Dendritic cell treated with granulocyte-macrophage colony-stimulating factor and Interleukin-4, amounts not matched to agents 40 ng/mL and 50 ng/mL, for 4 days (primary cell): ENCODE measurements at regions of chr3 and their contacts with region 1.

Region 1: GRCh38 chr3:17894434-17895060 is 152.1 kb upstream of the TBC1D5 start:
- H3K4me3 Mint-ChIP-seq: no peak overlapping the region
- H3K27ac Mint-ChIP-seq: no peak overlapping the region
- H3K4me1 Mint-ChIP-seq: no peaks in the 10 kb centered on the region
- H3K27me3 Mint-ChIP-seq: no peaks in the 10 kb centered on the region

Region 2: DNA sequence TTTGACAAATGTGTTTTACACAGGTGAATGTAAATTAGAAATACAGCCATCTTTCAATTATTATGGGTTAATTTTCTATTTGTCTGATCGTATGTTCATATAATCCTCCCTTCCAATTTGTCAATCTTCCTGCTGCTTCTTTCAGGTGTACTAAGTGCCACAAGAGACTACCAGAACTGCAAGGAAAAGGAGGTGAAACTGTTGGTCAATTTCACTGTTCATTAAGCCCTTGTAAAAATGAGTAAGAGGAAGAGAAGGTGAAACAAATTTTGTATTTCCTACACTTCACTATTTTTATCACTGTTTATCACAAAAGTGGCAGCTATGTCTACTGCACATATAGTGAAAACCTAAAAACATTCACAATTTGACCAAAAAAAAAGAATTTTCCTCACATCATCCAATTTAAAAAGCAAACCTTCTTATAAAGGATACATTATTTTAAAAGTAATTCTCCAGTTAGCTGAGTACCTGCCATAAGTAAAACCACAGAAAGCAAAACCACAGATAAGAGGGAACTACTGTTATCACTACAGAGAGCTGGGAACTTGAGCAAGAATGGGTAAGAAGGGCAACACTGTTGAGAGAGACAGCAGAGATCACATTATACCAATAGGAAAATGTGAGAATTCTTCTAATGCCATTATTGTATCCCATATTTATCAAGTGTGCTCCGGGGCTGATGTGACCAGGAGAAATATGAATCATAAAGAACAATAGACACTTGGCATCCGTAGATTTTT is 315.1 kb before region 1 on chr3:
- intact Hi-C with region 1: no loop called
- H3K4me3 Mint-ChIP-seq: no peak overlapping the region
- H3K27ac Mint-ChIP-seq: no peak overlapping the region
- H3K4me1 Mint-ChIP-seq: no peaks in the 10 kb centered on the region
- H3K27me3 Mint-ChIP-seq: no peaks in the 10 kb centered on the region

Region 3: DNA sequence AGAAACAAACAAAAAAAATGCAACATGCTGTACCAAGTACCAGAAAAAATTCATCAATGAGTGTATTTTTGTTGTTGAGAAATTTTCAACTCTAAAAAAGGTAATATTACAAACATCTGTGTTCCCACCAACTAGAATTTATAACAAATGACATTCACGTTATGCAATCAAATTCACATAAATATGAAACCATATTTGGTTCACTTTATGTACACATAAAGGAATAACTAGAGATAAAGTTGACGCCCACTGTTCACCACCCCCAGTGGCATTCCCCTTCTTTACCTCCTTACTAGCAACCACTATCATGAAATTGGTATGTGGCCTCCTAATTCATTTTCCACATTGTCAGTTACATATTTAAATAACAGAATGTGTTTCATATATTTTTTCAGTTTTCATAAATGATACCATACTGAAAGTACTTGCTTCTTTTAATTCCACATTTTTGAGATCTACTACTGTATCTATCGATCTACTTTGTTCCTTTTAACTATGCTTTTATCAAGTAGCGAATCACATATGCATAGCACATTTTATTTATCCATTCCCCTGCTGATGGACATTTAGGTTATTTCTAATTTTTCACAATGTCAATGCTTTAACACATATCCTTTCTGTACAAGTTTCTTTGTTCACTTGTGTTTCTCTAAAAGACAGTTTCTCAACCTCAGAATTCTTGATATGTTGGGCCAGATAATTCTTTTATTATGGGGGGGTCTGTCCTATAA is 186.6 kb before region 1 on chr3:
- intact Hi-C with region 1: no loop called
- H3K4me3 Mint-ChIP-seq: no peak overlapping the region
- H3K27ac Mint-ChIP-seq: peak overlapping the region; percentile 35
- H3K4me1 Mint-ChIP-seq: peaks cover 20% of the 10 kb centered on the region
- H3K27me3 Mint-ChIP-seq: no peaks in the 10 kb centered on the region

Region 4: DNA sequence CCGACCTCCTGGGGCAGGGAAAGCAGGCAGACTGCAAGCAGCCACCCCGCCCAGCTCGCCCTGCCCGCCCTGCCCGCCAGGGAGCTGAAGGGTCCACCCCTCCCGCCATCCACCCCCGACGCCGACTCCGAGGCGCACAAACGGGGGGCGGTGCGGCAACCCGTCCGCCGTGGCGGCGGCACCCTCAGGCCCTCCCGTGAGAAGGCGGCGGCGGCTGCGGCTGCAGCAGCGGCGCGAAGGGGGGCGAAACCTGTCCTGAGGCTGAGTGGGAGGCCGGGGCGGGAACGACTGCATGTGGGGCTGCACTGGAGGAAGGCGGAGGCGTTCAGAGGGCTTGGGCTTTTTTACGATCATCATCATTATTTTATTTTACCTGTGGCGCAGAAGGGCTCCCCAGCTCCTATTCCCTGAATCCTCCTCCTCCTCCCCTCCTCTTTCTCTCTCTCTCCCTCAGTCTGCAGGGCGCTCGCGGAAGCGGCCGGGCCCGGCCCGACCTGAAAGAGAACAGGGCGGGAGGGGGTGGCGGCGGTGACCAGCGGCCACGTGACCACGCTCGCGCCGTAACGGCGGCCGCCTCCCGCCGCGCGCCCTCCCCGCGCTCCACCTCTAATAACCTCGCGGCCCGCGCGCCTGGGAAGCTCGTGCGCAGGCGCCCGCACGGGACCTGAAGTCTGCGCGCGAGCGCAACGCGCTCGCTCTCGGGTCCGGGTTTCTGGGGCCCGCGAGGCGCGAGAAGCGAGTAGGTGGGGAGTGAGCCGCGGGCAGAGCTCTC is 152.3 kb before region 1 on chr3 and contains the start of gene TBC1D5:
- intact Hi-C with region 1: no loop called
- H3K4me3 Mint-ChIP-seq: peak within 1 kb of the TSS; percentile 96
- H3K27ac Mint-ChIP-seq: peak within 1 kb of the TSS; percentile 99
- H3K4me1 Mint-ChIP-seq: peaks cover 61% of the 10 kb centered on the region
- H3K27me3 Mint-ChIP-seq: no peaks in the 10 kb centered on the region

Region 5: DNA sequence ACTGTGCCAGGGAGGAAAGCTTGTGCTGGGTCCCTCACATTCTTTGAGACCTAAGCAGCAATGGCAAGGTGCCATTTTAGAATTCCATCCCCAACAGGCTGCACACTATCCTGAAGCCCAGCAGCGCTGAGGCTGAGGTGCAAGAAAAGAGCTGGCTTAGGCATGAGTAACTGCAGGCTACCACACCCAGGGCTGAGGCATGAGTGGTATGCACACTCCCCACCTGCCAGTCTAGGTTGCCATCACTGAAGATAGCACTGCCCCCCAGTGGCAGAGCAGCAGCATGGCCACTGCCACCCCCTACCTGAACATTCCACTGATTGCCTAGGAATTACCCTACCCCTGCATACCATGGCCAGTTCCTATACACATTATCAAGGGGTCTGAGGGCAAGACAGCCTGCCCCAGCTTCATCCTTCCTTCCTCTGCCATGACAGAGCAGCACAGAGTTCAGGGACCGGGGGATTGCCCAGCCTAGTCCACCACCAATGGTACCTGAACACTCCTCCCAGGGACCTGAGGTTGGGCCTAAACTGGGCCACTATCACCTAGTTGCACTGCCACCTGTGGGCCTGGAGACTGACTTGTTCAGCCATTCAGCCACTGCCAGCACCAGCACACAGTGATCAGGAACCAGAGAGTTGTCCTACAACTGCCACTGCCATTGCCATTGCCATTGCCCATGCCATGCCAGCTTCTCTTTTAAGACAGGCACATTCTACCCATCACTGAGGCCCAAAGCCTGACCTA is 400.8 kb after region 1 on chr3:
- intact Hi-C with region 1: loop called (anchors 1 kb)
- H3K4me3 Mint-ChIP-seq: no peak overlapping the region
- H3K27ac Mint-ChIP-seq: no peak overlapping the region
- H3K4me1 Mint-ChIP-seq: no peaks in the 10 kb centered on the region
- H3K27me3 Mint-ChIP-seq: no peaks in the 10 kb centered on the region

Region 6: GRCh38 chr3:18389108-18389733 is 494.7 kb after region 1 on chr3:
- intact Hi-C with region 1: loop called (anchors 2 kb)
- H3K4me3 Mint-ChIP-seq: no peak overlapping the region
- H3K27ac Mint-ChIP-seq: no peak overlapping the region
- H3K4me1 Mint-ChIP-seq: no peaks in the 10 kb centered on the region
- H3K27me3 Mint-ChIP-seq: no peaks in the 10 kb centered on the region